ENCODE measurements at regions of chr2 and their contacts with region 1.

Region 1: DNA sequence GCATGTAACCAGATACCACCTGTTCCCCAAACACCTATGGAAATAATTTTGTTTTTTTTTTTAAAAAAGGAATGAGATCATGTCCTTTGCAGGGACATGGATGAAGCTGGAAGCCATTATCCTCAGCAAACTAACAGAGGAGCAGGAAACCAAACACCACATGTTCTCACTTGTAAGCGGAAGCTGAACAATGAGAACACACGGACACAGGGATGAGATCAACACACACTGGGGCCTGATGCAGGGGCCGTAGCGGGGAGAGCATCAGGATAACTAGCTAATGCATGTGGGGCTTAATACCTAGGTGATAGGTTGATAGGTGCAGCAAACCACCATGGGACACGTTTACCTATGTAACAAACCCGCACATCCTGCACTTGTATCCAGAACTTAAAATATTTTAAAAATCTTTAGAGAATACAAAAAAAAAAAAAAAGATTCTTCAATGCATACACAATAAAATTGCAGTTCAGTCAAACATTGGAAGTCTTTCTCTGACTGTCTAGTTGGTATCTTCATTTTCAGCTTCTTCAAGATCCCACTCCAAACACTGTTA is 11.6 kb upstream of the CASP10 start:
- DNase-seq: no peak
- H3K4me3 ChIP-seq: no peak overlapping the region
- H3K4me1 ChIP-seq: peaks cover 14% of the 10 kb centered on the region
- H3K27me3 ChIP-seq: no peaks in the 10 kb centered on the region

Region 2: DNA sequence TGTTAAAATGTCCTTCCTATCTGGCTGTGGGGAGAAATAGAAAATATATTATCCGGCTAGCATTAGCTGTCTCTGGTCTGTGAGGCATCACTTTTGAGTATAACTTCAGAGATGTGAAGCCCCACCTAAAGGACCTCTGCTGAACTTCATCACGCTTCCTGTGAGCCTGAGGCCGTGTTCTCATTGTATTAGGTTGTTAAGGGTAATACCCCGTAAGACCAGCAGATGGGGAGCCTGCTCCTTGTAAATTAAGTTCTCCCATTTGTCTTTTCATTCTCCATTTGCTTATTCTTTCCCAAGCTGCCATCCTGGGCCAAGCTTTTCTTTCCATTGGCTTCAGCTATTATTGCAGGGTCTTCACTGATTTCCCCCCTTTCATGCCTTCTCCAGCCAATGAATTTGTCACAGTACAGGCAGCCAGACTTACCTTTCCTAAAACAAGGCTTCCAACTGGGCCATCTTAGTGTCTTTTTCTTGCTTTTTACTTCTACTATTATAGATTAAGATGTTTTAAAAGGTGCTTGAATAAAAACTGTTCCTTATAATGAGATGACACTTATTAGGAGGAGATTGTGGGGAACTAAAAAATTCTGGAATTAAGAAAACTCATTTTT is 269.8 kb before region 1 on chr2:
- in situ Hi-C with region 1: loop called (anchors 10 kb)
- DNase-seq: peak; percentile 79 to 95
- H3K4me3 ChIP-seq: no peak overlapping the region
- H3K4me1 ChIP-seq: no peaks in the 10 kb centered on the region
- H3K27me3 ChIP-seq: no peaks in the 10 kb centered on the region

Region 3: DNA sequence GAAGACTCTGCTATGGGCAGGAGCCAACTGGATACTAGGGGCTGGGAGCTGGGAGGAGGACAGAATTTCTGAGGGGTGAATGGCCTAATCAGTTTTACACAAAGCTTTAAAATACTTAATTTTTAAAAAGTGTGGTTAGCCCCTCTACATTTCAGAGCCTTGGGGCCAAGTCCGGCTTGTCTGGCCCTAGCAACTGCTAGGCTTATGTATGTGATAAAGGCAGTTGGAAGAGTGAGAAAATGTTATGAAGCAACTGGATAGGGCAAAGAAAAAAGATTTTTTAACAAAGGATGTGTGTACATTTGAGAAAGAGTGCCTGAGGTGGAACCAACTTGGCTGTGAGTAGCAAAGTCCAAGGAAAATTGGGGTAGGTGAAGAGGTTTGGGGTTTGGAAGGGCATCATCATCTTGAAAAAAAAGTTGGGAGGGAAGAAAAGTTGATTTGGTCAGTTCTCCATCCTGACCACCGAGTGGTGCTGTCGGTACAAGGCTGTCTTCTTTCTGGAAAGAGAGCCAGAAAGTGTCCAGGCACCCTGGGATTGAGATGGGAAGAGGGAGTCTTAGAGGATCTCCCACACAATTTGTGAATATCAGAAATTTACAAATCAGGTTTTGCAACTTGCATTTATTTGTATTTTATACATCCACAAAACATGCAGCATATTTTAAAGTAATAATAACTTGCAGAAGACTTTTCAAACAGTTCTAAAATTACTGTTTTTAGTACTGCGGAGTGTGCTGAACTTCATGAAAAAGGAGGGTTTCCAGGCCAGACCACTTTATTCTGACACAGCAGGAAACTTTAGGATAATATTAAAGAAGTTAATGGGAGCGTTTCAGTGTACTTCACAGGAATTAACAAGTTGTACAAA is 624.5 kb after region 1 on chr2:
- in situ Hi-C with region 1: no loop called
- DNase-seq: peak; percentile 54 to 61
- H3K4me3 ChIP-seq: no peak overlapping the region
- H3K4me1 ChIP-seq: peaks cover 8% of the 10 kb centered on the region
- H3K27me3 ChIP-seq: no peaks in the 10 kb centered on the region

Measured in HAP-1 (cell line).